Naive thymus-derived CD4-positive, alpha-beta T cell (primary cell): ENCODE measurements at regions of chr11 and their contacts with region 1.

Region 1: DNA sequence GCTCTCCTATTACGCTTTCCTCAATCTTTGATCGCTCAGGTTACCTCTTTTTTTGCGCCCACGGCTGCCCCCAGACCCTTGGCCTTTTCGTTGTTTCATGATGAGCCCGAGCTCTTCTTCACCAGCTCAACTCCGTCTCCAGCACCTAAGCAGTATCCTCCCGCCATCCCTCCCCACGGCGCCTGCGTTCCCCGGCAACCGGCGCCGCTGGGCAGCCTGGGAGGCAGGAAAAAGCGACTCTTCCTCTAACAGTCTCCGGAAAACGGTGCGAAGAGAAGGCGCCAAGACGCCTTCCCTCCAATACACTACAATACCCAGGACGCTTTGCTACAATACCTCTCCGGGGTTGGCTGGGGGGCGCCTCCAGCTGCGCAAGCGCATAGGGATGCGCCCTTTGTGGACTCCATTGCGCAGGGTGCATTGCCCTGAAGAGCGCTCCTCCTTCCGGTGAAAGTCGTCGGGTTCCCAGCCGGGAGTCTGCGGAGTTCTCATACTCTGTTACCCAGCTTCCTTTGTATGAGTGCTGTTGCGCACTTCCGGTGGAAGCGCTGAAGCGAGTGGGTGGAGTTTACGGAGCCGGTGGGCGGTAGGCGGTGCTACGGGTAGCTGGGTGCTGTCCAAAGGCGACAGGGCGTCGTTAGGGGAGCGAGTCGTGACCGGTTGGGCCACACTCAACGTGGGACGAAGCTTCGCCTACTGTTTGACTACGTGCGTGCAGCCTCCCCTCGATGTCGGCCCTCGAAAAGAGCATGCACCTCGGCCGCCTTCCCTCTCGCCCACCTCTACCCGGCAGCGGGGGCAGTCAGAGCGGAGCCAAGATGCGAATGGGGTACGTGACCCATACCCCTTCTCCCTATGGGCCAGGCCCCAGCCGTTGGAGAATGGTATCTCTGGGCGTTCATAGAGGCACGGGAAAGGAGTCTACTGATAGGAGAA is at the starts of genes C2CD3 and PPME1:
- DNase-seq: peak; percentile 83 to 99 (median 98)
- ATAC-seq: peak; percentile 96
- H3K4me3 ChIP-seq: peak within 1 kb of the TSS; percentile 73
- H3K4me3 Mint-ChIP-seq: no peak within 1 kb of the TSS
- H3K27ac ChIP-seq: peak within 1 kb of the TSS; percentile 76
- H3K27ac Mint-ChIP-seq: no peak within 1 kb of the TSS
- H3K4me1 ChIP-seq: peaks cover 30 to 32% of the 10 kb centered on the region in 2 donors
- H3K4me1 Mint-ChIP-seq: peaks cover 5 to 32% (median 18%) of the 10 kb centered on the region in 7 donors
- H3K27me3 ChIP-seq: no peaks in the 10 kb centered on the region
- H3K27me3 Mint-ChIP-seq: no peaks in the 10 kb centered on the region
- total RNA-seq, gene C2CD3: 33.1 to 42.5 (median 40.7) TPM
- total RNA-seq, gene PPME1: 18.1 to 41.7 (median 20.2) TPM

Region 2: GRCh38 chr11:72430741-72431570 is 1740.0 kb before region 1 on chr11:
- CTCF ChIA-PET with region 1: no interaction called
- POLR2A ChIA-PET with region 1: no interaction called
- intact Hi-C with region 1: loop called in 1 of 2 experiments (anchors 2 kb)
- DNase-seq: peak; percentile 16 to 61 (median 52)
- ATAC-seq: peak; percentile 25
- H3K4me3 ChIP-seq: no peak overlapping the region
- H3K4me3 Mint-ChIP-seq: peak overlapping the region in 9 of 10 donors; percentile 18 to 70 (median 57)
- H3K27ac ChIP-seq: no peak overlapping the region
- H3K27ac Mint-ChIP-seq: peak overlapping the region; percentile 6 to 84 (median 79)
- H3K4me1 ChIP-seq: peaks cover 12 to 13% of the 10 kb centered on the region in 2 donors
- H3K4me1 Mint-ChIP-seq: peaks cover 18 to 48% (median 40%) of the 10 kb centered on the region in 7 donors
- H3K27me3 ChIP-seq: no peaks in the 10 kb centered on the region
- H3K27me3 Mint-ChIP-seq: no peaks in the 10 kb centered on the region

Region 3: GRCh38 chr11:73647459-73648100 is 523.4 kb before region 1 on chr11:
- CTCF ChIA-PET with region 1: no interaction called
- POLR2A ChIA-PET with region 1: no interaction called
- intact Hi-C with region 1: loop called in 1 of 2 experiments (anchors 1 kb)
- DNase-seq: peak; percentile 81 to 96 (median 94)
- ATAC-seq: peak; percentile 100
- H3K4me3 ChIP-seq: peak overlapping the region; percentile 62
- H3K4me3 Mint-ChIP-seq: peak overlapping the region; percentile 71 to 96 (median 92)
- H3K27ac ChIP-seq: peak overlapping the region; percentile 71
- H3K27ac Mint-ChIP-seq: peak overlapping the region; percentile 83 to 98 (median 94)
- H3K4me1 ChIP-seq: peaks cover 7 to 15% of the 10 kb centered on the region in 2 donors
- H3K4me1 Mint-ChIP-seq: peaks cover 10 to 41% (median 34%) of the 10 kb centered on the region in 7 donors
- H3K27me3 ChIP-seq: no peaks in the 10 kb centered on the region
- H3K27me3 Mint-ChIP-seq: peaks cover 0 to 8% (median 0%) of the 10 kb centered on the region in 5 donors

Region 4: DNA sequence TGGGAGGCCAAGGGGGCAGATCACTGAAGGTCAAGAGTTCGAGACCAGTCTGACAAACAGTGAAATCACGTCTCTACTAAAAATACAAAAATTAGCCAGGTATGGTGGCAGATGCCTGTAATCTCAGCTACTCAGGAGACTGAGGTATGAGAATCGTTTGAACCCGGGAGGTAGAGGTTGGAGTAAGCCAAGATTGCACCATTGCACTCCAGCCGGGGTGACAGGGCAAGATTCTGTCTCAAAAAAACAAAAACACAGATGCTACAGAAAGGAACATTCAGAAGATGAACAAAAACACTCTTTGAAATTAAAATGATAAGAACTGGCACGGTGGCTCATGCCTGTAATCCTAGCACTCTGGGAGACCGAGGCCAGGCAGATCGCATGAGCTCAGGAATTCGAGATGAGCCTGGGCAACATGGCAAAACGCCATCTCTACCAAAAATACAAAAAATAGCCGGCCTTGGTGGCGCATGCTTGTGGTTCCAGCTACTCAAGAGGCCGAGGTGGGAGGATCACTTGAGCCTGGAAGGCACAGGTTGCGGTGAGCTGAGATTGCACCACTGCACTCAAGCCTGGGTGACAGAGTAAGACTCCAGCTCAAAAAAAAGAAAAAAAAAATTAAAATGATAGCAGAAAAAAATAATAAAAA is 418.6 kb before region 1 on chr11:
- CTCF ChIA-PET with region 1: no interaction called
- POLR2A ChIA-PET with region 1: no interaction called
- intact Hi-C with region 1: no loop called
- DNase-seq: no peak
- ATAC-seq: no peak
- H3K4me3 ChIP-seq: no peak overlapping the region
- H3K4me3 Mint-ChIP-seq: peak overlapping the region in 7 of 10 donors; percentile 1 to 52 (median 18)
- H3K27ac ChIP-seq: no peak overlapping the region
- H3K27ac Mint-ChIP-seq: peak overlapping the region in 8 of 9 donors; percentile 13 to 77 (median 50)
- H3K4me1 ChIP-seq: peaks cover 0 to 6% of the 10 kb centered on the region in 2 donors
- H3K4me1 Mint-ChIP-seq: peaks cover 40 to 63% (median 55%) of the 10 kb centered on the region in 7 donors
- H3K27me3 ChIP-seq: no peaks in the 10 kb centered on the region
- H3K27me3 Mint-ChIP-seq: no peaks in the 10 kb centered on the region

Region 5: DNA sequence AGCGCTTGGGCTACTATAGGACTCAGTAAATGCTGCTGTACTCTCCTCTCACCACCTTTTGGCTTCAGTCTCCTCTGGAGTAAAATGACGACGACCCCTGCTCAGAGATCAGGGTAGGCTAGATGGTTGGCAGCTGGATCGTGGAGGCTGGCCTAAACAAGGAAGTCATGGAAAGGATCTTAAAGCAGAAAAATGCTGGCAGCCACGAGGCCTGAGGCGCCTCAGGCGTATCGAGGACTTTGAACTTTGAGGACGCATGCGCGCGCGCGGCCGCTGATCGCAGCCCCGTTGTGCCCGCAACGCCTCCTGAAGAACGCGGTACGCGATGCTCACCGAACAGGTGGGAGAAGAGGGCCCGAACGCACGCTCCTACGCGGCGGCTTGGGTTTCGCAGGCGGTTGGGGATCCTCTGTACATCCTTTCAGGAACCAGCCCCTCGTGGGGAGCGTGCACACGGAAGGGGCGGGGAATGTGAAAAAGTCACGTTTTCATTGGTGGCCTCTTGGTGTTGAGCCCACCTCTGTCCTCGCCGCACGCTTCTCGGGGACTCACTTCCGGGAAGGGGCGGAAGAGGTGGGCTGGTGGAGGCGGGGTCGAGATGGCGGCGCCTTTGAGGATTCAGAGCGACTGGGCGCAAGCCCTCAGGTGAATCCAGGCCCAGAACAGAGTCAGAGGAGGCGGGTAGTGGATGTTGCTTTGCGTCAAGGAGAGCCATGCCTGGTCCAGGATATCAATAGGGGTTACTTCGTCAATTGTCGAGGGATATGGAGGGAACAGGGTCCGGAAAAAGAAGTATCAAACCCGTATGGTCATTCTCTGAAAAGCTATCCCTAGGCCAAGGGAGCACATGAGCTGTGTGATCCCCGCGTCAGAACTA is 294.3 kb before region 1 on chr11 and contains the starts of genes COA4 and PAAF1:
- CTCF ChIA-PET with region 1: no interaction called
- POLR2A ChIA-PET with region 1: no interaction called
- intact Hi-C with region 1: loop called (anchors 1 kb)
- DNase-seq: peak; percentile 72 to 95 (median 94)
- ATAC-seq: peak; percentile 99
- H3K4me3 ChIP-seq: peak within 1 kb of the TSS; percentile 94
- H3K4me3 Mint-ChIP-seq: peak within 1 kb of the TSS; percentile 94 to 98 (median 96)
- H3K27ac ChIP-seq: peak within 1 kb of the TSS; percentile 88
- H3K27ac Mint-ChIP-seq: peak within 1 kb of the TSS; percentile 92 to 100 (median 97)
- H3K4me1 ChIP-seq: peaks cover 17 to 19% of the 10 kb centered on the region in 2 donors
- H3K4me1 Mint-ChIP-seq: peaks cover 20 to 55% (median 43%) of the 10 kb centered on the region in 7 donors
- H3K27me3 ChIP-seq: no peaks in the 10 kb centered on the region
- H3K27me3 Mint-ChIP-seq: no peaks in the 10 kb centered on the region
- total RNA-seq, gene COA4: 29.1 to 75.0 (median 58.2) TPM
- total RNA-seq, gene PAAF1: 12.4 to 22.7 (median 20.3) TPM

Region 6: GRCh38 chr11:73995247-73995646 is 175.7 kb before region 1 on chr11:
- CTCF ChIA-PET with region 1: no interaction called
- POLR2A ChIA-PET with region 1: interaction called, 3 read pairs
- intact Hi-C with region 1: loop called in 1 of 2 experiments (anchors 1 kb)
- DNase-seq: peak in 8 of 9 donors; percentile 16 to 93 (median 90)
- ATAC-seq: peak; percentile 85
- H3K4me3 ChIP-seq: peak overlapping the region; percentile 4
- H3K4me3 Mint-ChIP-seq: peak overlapping the region; percentile 65 to 92 (median 80)
- H3K27ac ChIP-seq: peak overlapping the region; percentile 92
- H3K27ac Mint-ChIP-seq: peak overlapping the region; percentile 93 to 100 (median 97)
- H3K4me1 ChIP-seq: peaks cover 33 to 45% of the 10 kb centered on the region in 2 donors
- H3K4me1 Mint-ChIP-seq: peaks cover 26 to 81% (median 71%) of the 10 kb centered on the region in 7 donors
- H3K27me3 ChIP-seq: no peaks in the 10 kb centered on the region
- H3K27me3 Mint-ChIP-seq: no peaks in the 10 kb centered on the region

Region 7: GRCh38 chr11:74592441-74593362 is 421.7 kb after region 1 on chr11 and contains the start of gene POLD3:
- CTCF ChIA-PET with region 1: no interaction called
- POLR2A ChIA-PET with region 1: no interaction called
- intact Hi-C with region 1: loop called (anchors 1 to 2 kb)
- DNase-seq: peak; percentile 83 to 97 (median 94)
- ATAC-seq: peak; percentile 99
- H3K4me3 ChIP-seq: peak within 1 kb of the TSS; percentile 98
- H3K4me3 Mint-ChIP-seq: peak within 1 kb of the TSS; percentile 90 to 100 (median 92)
- H3K27ac ChIP-seq: peak within 1 kb of the TSS; percentile 96
- H3K27ac Mint-ChIP-seq: peak within 1 kb of the TSS; percentile 90 to 99 (median 95)
- H3K4me1 ChIP-seq: peaks cover 9% of the 10 kb centered on the region in 2 donors
- H3K4me1 Mint-ChIP-seq: peaks cover 7 to 33% (median 27%) of the 10 kb centered on the region in 7 donors
- H3K27me3 ChIP-seq: no peaks in the 10 kb centered on the region
- H3K27me3 Mint-ChIP-seq: peaks cover 0 to 5% (median 0%) of the 10 kb centered on the region in 5 donors
- total RNA-seq, gene POLD3: 8.0 to 40.8 (median 14.7) TPM

Region 8: GRCh38 chr11:75814686-75815344 is 1643.9 kb after region 1 on chr11 and contains the start of gene UVRAG:
- CTCF ChIA-PET with region 1: no interaction called
- POLR2A ChIA-PET with region 1: no interaction called
- intact Hi-C with region 1: loop called in 1 of 2 experiments (anchors 10 kb)
- DNase-seq: peak; percentile 96 to 99 (median 98)
- ATAC-seq: peak; percentile 94
- H3K4me3 ChIP-seq: peak within 1 kb of the TSS; percentile 96
- H3K4me3 Mint-ChIP-seq: peak within 1 kb of the TSS in 3 of 10 donors; percentile 93 to 99 (median 98)
- H3K27ac ChIP-seq: peak within 1 kb of the TSS; percentile 83
- H3K27ac Mint-ChIP-seq: peak within 1 kb of the TSS in 7 of 9 donors; percentile 88 to 100 (median 96)
- H3K4me1 ChIP-seq: peaks cover 14 to 26% of the 10 kb centered on the region in 2 donors
- H3K4me1 Mint-ChIP-seq: peaks cover 5 to 21% (median 20%) of the 10 kb centered on the region in 7 donors
- H3K27me3 ChIP-seq: no peaks in the 10 kb centered on the region
- H3K27me3 Mint-ChIP-seq: peaks cover 0 to 4% (median 0%) of the 10 kb centered on the region in 5 donors
- total RNA-seq, gene UVRAG: 24.0 to 46.1 (median 25.4) TPM